ENCODE measurements at regions of chr6 and their contacts with region 1.

Region 1: GRCh38 chr6:132495604-132496079 is 17.3 kb downstream of the STX7 start:
- DNase-seq: no peak
- H3K4me3 Mint-ChIP-seq: no peak overlapping the region
- H3K27ac Mint-ChIP-seq: no peak overlapping the region
- H3K4me1 Mint-ChIP-seq: peaks cover 44% of the 10 kb centered on the region
- H3K27me3 Mint-ChIP-seq: no peaks in the 10 kb centered on the region

Region 2: DNA sequence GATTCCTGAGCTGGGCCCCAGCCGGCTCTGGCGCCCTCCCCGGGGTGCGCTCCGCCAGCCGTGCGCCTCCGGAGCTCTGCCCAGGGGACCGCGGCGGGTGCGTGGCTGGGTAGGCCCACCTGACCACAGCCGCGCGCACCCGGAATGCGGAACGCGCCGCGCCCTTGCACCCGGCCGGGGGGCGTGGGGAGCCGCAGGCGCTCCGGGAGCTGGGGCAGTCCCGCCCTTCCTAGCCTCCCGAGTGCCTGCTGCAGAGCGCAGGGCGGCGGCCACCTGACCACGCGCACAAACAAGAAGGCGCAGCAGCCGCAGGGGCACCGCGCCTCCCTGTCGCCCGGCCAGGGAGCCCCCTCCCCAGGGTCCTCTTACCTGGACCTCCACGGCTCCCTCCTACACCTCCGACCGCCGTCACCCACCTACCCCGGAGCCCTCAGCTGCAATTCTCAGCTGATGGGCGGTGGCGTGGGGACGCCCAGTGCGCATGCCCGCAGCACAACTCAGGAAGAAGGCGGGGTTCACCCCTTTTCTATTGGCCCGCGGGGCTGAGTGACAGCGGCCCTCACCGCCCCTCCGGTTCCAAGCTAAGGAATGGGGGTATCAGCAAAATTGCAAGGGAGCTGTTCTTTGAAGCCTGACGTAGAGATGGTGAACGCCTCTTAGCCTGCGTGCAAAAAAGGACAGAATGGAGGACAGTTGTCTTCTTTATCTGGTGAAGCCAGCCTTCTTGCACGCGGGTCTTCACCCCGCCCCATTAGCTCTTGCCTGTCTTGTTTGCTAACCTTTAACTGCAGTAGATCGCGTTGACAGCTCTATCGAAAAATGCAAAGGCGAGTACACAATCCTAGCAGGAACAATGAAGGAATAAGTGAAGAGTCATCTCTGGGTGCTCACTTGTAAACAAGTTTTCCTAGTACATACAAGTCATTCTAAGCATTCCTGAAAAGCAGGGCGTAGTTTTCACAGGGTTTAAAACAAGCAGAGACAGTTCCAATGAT is 17.3 kb after region 1 on chr6 and contains the start of gene STX7:
- CTCF ChIA-PET with region 1: interaction called, 4 read pairs
- intact Hi-C with region 1: loop called (anchors 1 kb)
- DNase-seq: peak; percentile 83
- H3K4me3 Mint-ChIP-seq: peak within 1 kb of the TSS; percentile 95
- H3K27ac Mint-ChIP-seq: no peak within 1 kb of the TSS
- H3K4me1 Mint-ChIP-seq: peaks cover 26% of the 10 kb centered on the region
- H3K27me3 Mint-ChIP-seq: no peaks in the 10 kb centered on the region
- total RNA-seq, gene STX7: 11.3 to 11.7 TPM

Region 3: DNA sequence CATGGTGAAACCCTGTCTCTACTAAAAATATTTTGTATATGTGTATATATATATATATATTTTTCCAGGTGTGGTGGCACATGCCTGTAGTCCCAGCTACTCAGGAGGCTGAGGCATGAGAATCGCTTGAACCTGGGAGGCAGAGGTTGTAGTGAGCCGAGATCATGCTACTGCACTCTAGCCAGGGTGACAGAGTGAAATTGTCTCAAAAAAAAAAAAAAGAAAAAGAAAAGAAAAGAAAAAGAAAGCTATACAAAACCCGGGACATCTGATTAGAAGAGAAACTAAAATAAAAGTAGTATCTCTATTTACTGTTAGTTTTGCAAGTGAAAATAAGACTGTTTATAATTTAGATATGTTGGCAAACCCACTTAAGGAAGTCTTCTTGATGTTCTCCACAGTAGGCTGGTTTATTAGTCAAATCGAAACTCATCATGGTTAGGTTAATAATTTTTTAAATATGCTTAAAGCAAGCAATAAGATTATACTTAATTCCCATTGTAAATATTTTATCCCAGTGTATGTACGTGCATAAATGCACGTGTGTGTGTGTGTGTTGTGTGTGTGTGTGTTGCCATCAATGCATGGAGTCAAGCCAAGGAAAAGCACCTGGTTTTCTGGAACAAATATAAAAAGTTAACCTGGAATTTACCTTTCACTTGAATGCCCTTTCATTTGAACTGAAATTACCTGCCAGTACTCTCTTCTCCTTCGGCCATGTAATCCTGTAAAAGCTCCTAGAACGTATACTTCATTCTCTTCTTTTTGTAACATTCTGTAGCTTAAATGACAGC is 255.0 kb after region 1 on chr6:
- CTCF ChIA-PET with region 1: no interaction called
- intact Hi-C with region 1: no loop called
- DNase-seq: no peak
- H3K4me3 Mint-ChIP-seq: no peak overlapping the region
- H3K27ac Mint-ChIP-seq: peak overlapping the region; percentile 25
- H3K4me1 Mint-ChIP-seq: peaks cover 23% of the 10 kb centered on the region
- H3K27me3 Mint-ChIP-seq: no peaks in the 10 kb centered on the region

Measured in activated naive CD4-positive, alpha-beta T cell treated with anti-CD3 and anti-CD28 coated beads for 36 hours (primary cell).